Naive thymus-derived CD4-positive, alpha-beta T cell (primary cell): ENCODE measurements at regions of chr6 and their contacts with region 1.

Region 1: DNA sequence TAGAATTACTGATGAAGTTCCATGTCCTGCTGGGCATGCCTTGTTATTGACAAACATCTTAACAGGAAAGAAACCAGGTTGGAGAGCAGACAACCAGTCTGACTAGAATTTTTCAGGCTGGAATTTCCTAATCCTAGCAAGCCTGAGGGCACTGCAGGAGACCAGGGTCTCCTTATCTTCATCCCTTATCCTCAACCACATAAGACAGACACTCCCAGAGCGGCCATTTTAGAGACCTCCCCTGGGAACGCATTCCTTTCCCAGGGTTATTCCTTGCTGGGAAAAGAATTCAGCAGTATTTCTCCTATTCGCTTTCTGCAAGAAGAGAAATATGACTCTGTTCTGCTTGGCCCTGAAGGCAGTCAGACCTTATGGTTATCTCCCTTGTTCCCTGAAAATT is 803.7 kb downstream of the GRIK2 start:
- DNase-seq: no peak
- ATAC-seq: no peak
- H3K4me3 ChIP-seq: no peak overlapping the region
- H3K4me3 Mint-ChIP-seq: no peak overlapping the region
- H3K27ac ChIP-seq: no peak overlapping the region
- H3K27ac Mint-ChIP-seq: no peak overlapping the region
- H3K4me1 ChIP-seq: no peaks in the 10 kb centered on the region
- H3K4me1 Mint-ChIP-seq: no peaks in the 10 kb centered on the region
- H3K27me3 ChIP-seq: no peaks in the 10 kb centered on the region
- H3K27me3 Mint-ChIP-seq: no peaks in the 10 kb centered on the region

Region 2: DNA sequence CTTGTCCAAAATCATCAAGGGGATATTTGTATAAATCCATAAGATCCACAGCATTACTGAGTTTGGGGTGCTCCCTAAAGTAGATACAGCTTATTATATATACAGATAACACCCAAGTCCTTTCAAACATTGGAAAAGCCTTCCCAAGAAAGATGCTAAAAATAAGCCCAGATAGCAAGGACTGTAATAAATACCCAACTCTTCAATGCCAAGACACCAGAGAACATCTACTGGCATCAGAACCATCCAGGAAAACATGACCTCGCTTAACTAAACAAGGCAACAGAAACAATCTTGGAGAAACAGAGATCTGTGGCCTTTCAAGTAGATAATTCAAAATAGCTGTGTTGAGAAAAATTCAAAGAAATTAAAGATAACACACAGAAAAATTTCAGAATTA is 42.3 kb before region 1 on chr6:
- CTCF ChIA-PET with region 1: no interaction called
- POLR2A ChIA-PET with region 1: no interaction called
- intact Hi-C with region 1: no loop called
- DNase-seq: no peak
- ATAC-seq: no peak
- H3K4me3 ChIP-seq: no peak overlapping the region
- H3K4me3 Mint-ChIP-seq: no peak overlapping the region
- H3K27ac ChIP-seq: no peak overlapping the region
- H3K27ac Mint-ChIP-seq: no peak overlapping the region
- H3K4me1 ChIP-seq: no peaks in the 10 kb centered on the region
- H3K4me1 Mint-ChIP-seq: no peaks in the 10 kb centered on the region
- H3K27me3 ChIP-seq: no peaks in the 10 kb centered on the region
- H3K27me3 Mint-ChIP-seq: no peaks in the 10 kb centered on the region

Region 3: GRCh38 chr6:102398788-102399390 is 201.7 kb after region 1 on chr6:
- CTCF ChIA-PET with region 1: no interaction called
- POLR2A ChIA-PET with region 1: no interaction called
- intact Hi-C with region 1: loop called in 1 of 2 experiments (anchors 5 kb)
- DNase-seq: no peak
- ATAC-seq: no peak
- H3K4me3 ChIP-seq: no peak overlapping the region
- H3K4me3 Mint-ChIP-seq: no peak overlapping the region
- H3K27ac ChIP-seq: no peak overlapping the region
- H3K27ac Mint-ChIP-seq: no peak overlapping the region
- H3K4me1 ChIP-seq: no peaks in the 10 kb centered on the region
- H3K4me1 Mint-ChIP-seq: no peaks in the 10 kb centered on the region
- H3K27me3 ChIP-seq: no peaks in the 10 kb centered on the region
- H3K27me3 Mint-ChIP-seq: no peaks in the 10 kb centered on the region